Breast epithelium (tissue), 4 donors: ENCODE measurements at regions of chr2 and their contacts with region 1.

Region 1: DNA sequence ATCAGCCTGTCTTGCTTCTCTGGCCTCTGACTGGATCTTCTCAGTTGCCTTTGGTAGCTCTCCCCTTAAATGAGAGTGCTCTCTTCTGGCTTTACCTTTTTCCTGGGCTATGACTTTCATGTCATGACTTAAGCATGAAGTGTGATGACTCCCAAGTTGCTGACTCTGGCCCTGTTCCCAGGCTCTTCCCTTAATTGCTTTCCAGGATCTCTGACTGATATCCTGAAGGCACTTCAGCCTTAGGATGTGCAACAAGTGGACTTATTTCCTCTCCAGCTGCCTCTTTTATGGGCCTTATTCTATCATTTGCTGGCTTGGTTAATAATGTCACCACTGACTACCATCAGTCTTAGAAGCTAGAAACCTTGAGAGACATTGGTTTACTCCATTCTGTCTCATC is 17.4 kb downstream of the SEMA4F start:
- DNase-seq: no peak
- H3K4me3 ChIP-seq: no peak overlapping the region
- H3K27ac ChIP-seq: no peak overlapping the region
- H3K4me1 ChIP-seq: no peaks in the 10 kb centered on the region
- H3K27me3 ChIP-seq: no peaks in the 10 kb centered on the region
- CTCF ChIP-seq: no peak
- POLR2A ChIP-seq: no peak

Region 2: DNA sequence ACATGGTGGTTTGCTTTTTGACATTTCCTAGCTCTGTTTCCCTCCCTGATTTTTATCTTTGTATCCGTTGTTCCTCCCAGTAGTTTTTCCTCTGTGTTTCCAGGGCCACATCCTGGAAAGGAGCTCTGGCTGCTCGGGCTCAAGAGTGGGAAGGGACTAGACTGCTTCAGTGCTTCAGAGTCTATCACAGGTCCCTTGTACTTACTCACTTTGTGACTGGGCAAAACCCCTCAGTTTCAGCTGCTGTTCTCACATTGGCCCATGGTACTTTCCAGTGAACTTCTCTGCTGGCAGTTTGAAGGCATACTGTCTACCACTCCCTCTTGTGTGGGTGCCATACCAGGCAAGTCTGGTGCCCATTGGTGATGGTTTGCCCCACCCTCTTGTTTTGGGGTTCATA is 850.3 kb before region 1 on chr2:
- intact Hi-C with region 1: no loop called
- DNase-seq: no peak
- H3K4me3 ChIP-seq: no peak overlapping the region
- H3K27ac ChIP-seq: no peak overlapping the region
- H3K4me1 ChIP-seq: no peaks in the 10 kb centered on the region
- H3K27me3 ChIP-seq: no peaks in the 10 kb centered on the region
- CTCF ChIP-seq: no peak
- POLR2A ChIP-seq: no peak

Region 3: GRCh38 chr2:75012080-75012479 is 340.6 kb after region 1 on chr2:
- intact Hi-C with region 1: loop called (anchors 5 kb)
- DNase-seq: no peak
- H3K4me3 ChIP-seq: no peak overlapping the region
- H3K27ac ChIP-seq: no peak overlapping the region
- H3K4me1 ChIP-seq: no peaks in the 10 kb centered on the region
- H3K27me3 ChIP-seq: no peaks in the 10 kb centered on the region
- CTCF ChIP-seq: no peak
- POLR2A ChIP-seq: no peak